ENCODE measurements at regions of chr11 and their contacts with region 1.

Region 1: DNA sequence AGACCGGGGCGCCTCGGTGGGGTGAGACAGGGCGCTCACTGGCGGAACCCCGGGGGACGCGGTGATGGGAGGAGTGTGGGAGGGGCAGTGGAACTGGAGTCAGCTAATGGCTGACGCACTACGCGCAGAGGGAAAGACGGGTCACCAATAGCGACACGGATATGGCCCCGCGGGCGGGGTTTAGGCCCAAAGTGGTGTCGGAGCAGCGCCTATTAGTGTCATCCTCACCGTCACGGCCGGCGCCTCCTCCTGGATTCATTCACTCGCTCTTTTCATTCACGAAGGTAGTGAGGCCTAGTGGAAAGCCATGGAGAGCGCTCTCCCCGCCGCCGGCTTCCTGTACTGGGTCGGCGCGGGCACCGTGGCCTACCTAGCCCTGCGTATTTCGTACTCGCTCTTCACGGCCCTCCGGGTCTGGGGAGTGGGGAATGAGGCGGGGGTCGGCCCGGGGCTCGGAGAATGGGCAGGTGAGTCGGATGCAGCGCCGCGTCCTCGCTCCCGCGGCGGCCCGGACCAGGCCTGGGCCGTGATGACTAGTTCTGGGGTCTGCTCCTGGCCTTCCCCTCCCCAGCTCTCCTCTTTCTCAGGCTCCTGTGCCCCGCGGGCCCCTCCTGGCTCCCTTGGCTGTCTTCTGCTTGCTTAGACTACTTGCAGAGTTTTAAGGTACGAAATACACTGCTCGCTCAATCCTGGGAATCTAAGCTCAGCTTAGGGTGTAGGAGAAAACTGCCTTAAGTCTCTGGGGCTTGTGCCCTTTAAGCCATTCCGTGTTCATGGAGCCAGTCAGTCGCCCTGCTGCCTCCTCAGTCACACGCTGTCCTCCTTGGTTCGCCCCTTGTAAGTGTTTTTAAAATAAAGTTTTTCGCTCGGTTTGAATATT is at the start of gene HSD17B12:
- DNase-seq: peak; percentile 99
- H3K4me3 ChIP-seq: peak within 1 kb of the TSS; percentile 57 to 85 (median 85)
- H3K4me3 Mint-ChIP-seq: peak within 1 kb of the TSS; percentile 91 to 93
- H3K27ac ChIP-seq: peak within 1 kb of the TSS; percentile 95 to 96
- H3K27ac Mint-ChIP-seq: peak within 1 kb of the TSS; percentile 95 to 99 (median 97)
- H3K4me1 ChIP-seq: peaks cover 21 to 23% of the 10 kb centered on the region in 2 donors
- H3K4me1 Mint-ChIP-seq: peaks cover 41% of the 10 kb centered on the region
- H3K27me3 ChIP-seq: no peaks in the 10 kb centered on the region
- H3K27me3 Mint-ChIP-seq: peaks cover 0 to 5% (median 5%) of the 10 kb centered on the region in 3 donors
- CTCF ChIP-seq: no peak
- polyA plus RNA-seq, gene HSD17B12: 13.3 to 35.5 (median 30.4) TPM

Region 2: DNA sequence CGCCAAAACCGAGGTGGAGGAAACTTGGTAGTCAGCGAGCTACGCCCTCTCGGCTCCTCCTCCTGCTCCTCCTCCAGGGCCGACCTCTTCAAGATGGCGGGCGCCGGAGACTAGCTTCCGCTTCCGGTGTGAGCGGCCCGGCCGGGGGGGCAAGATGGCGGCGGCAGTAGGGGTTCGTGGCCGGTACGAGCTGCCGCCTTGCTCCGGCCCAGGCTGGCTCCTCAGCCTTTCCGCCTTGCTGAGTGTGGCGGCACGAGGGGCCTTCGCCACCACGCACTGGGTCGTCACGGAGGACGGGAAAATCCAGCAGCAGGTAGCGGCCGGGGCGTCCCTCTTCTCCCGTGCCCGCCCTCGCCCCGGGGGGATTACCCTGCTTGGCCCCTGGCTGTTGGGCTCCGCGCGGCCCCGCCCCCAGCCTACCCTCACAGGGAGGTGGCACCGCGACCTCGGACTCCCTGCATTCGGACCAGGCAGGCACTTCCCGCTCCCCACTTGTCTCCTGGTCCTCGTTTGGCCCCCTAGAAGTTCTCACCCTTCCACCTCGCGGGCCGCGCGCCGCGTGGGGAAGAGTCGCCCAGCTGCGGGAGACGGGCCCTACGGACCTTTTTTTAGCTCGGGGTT is 321.9 kb before region 1 on chr11 and contains the start of gene TTC17:
- intact Hi-C with region 1: loop called (anchors 2 to 10 kb)
- DNase-seq: peak; percentile 88 to 90 (median 88)
- H3K4me3 ChIP-seq: peak within 1 kb of the TSS; percentile 66 to 91 (median 70)
- H3K4me3 Mint-ChIP-seq: peak within 1 kb of the TSS; percentile 97 to 98
- H3K27ac ChIP-seq: peak within 1 kb of the TSS; percentile 63 to 94
- H3K27ac Mint-ChIP-seq: peak within 1 kb of the TSS; percentile 89 to 97 (median 96)
- H3K4me1 ChIP-seq: peaks cover 23 to 27% of the 10 kb centered on the region in 2 donors
- H3K4me1 Mint-ChIP-seq: peaks cover 35% of the 10 kb centered on the region
- H3K27me3 ChIP-seq: no peaks in the 10 kb centered on the region
- H3K27me3 Mint-ChIP-seq: peaks cover 0 to 1% (median 0%) of the 10 kb centered on the region in 3 donors
- CTCF ChIP-seq: no peak
- polyA plus RNA-seq, gene TTC17: 34.7 to 82.5 (median 40.8) TPM

Region 3: DNA sequence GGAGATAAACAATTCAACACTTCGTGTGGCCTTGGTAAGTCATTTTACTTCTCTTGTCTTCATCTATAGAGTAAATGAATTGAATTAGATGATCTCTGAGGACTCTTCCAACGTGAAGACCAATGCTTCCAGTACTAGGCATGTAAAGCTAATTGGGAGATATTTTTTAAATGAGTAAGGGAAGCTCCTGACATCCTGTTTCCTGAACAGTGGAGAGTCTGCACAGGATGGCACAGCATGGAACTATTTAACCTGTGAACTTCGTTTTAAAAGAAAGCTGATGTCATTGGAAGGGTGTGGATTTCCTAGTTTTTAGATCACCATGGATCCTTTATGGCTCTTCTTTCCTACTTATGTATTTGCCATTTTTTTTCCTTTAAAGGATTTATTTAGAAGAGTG is 48.6 kb before region 1 on chr11:
- intact Hi-C with region 1: no loop called
- DNase-seq: no peak
- H3K4me3 ChIP-seq: no peak overlapping the region
- H3K4me3 Mint-ChIP-seq: no peak overlapping the region
- H3K27ac ChIP-seq: no peak overlapping the region
- H3K27ac Mint-ChIP-seq: no peak overlapping the region
- H3K4me1 ChIP-seq: no peaks in the 10 kb centered on the region
- H3K4me1 Mint-ChIP-seq: no peaks in the 10 kb centered on the region
- H3K27me3 ChIP-seq: peaks cover 34 to 55% of the 10 kb centered on the region in 2 donors
- H3K27me3 Mint-ChIP-seq: peaks cover 27 to 49% (median 36%) of the 10 kb centered on the region in 3 donors
- CTCF ChIP-seq: no peak

Region 4: DNA sequence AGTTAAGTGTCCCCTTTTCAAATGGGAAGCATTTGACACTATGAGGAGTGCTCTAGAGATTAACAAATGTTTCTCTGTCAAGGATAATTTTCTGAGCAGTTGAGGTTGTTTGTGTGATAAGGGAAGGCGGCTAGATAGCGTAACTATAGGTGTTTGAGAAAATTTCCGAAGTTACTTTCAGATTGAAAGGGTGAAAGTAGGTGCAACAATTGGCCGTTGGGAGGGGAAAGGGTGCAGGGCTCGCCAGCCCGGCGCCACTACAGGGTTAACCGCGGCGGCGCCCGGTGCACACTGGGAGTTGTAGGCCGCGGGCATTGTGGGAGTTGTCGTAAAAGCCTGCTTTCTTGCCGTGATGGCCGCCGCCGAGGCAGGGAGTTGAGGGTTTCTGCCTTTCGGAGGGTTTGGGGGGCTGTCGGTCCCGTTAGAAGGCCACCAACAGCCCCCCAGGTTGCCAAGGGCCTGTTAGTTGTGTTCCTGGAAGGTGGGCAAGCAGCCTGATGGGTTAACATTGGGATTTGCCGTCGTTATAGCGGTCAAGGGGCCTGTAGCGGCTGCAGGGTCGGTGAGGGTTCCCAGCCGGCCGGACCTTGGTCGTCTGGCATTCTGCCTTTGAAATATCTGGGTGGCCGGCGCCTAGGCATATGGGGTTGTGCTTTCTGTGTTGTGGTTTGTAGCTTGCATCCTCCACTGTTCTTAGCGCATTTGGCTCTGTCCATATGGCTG is 36.7 kb before region 1 on chr11:
- intact Hi-C with region 1: loop called (anchors 2 to 5 kb)
- DNase-seq: peak; percentile 69 to 76 (median 72)
- H3K4me3 ChIP-seq: peak overlapping the region; percentile 76 to 88 (median 85)
- H3K4me3 Mint-ChIP-seq: peak overlapping the region; percentile 91 to 94
- H3K27ac ChIP-seq: peak overlapping the region in 1 of 2 donors; percentile 80
- H3K27ac Mint-ChIP-seq: peak overlapping the region; percentile 58 to 97 (median 93)
- H3K4me1 ChIP-seq: peaks cover 7 to 16% of the 10 kb centered on the region in 2 donors
- H3K4me1 Mint-ChIP-seq: peaks cover 13% of the 10 kb centered on the region
- H3K27me3 ChIP-seq: peaks cover 14 to 23% of the 10 kb centered on the region in 2 donors
- H3K27me3 Mint-ChIP-seq: peaks cover 14 to 22% (median 15%) of the 10 kb centered on the region in 3 donors
- CTCF ChIP-seq: no peak

Region 5: GRCh38 chr11:43788421-43788820 is 107.7 kb after region 1 on chr11:
- intact Hi-C with region 1: loop called in 1 of 2 experiments (anchors 10 kb)
- DNase-seq: peak; percentile 78 to 83 (median 83)
- H3K4me3 ChIP-seq: peak overlapping the region in 2 of 3 experiments; percentile 33 to 62
- H3K4me3 Mint-ChIP-seq: peak overlapping the region; percentile 58 to 85
- H3K27ac ChIP-seq: peak overlapping the region; percentile 91 to 94
- H3K27ac Mint-ChIP-seq: peak overlapping the region; percentile 95 to 99 (median 99)
- H3K4me1 ChIP-seq: peaks cover 30 to 34% of the 10 kb centered on the region in 2 donors
- H3K4me1 Mint-ChIP-seq: peaks cover 24% of the 10 kb centered on the region
- H3K27me3 ChIP-seq: no peaks in the 10 kb centered on the region
- H3K27me3 Mint-ChIP-seq: no peaks in the 10 kb centered on the region
- CTCF ChIP-seq: no peak

Region 6: GRCh38 chr11:43868852-43869567 is 188.2 kb after region 1 on chr11:
- intact Hi-C with region 1: loop called in 1 of 2 experiments (anchors 10 kb)
- DNase-seq: peak; percentile 80 to 87 (median 84)
- H3K4me3 ChIP-seq: peak overlapping the region in 1 of 3 experiments; percentile 27
- H3K4me3 Mint-ChIP-seq: peak overlapping the region in 1 of 2 donors; percentile 44
- H3K27ac ChIP-seq: peak overlapping the region; percentile 38 to 65
- H3K27ac Mint-ChIP-seq: peak overlapping the region; percentile 74 to 96 (median 90)
- H3K4me1 ChIP-seq: peaks cover 20 to 22% of the 10 kb centered on the region in 2 donors
- H3K4me1 Mint-ChIP-seq: peaks cover 20% of the 10 kb centered on the region
- H3K27me3 ChIP-seq: peaks cover 3 to 17% of the 10 kb centered on the region in 2 donors
- H3K27me3 Mint-ChIP-seq: peaks cover 19 to 37% (median 21%) of the 10 kb centered on the region in 3 donors
- CTCF ChIP-seq: no peak

Measured in CD14-positive monocyte (primary cell).